HEK293 (cell line): ENCODE measurements at regions of chr5 and their contacts with region 1.

Region 1: GRCh38 chr5:150217873-150218692 is 28.2 kb downstream of the SLC6A7 start:
- H3K4me3 ChIP-seq: no peak overlapping the region
- H3K27ac ChIP-seq: no peak overlapping the region
- H3K4me1 ChIP-seq: no peaks in the 10 kb centered on the region
- CTCF ChIP-seq: peak; percentile 81

Region 2: DNA sequence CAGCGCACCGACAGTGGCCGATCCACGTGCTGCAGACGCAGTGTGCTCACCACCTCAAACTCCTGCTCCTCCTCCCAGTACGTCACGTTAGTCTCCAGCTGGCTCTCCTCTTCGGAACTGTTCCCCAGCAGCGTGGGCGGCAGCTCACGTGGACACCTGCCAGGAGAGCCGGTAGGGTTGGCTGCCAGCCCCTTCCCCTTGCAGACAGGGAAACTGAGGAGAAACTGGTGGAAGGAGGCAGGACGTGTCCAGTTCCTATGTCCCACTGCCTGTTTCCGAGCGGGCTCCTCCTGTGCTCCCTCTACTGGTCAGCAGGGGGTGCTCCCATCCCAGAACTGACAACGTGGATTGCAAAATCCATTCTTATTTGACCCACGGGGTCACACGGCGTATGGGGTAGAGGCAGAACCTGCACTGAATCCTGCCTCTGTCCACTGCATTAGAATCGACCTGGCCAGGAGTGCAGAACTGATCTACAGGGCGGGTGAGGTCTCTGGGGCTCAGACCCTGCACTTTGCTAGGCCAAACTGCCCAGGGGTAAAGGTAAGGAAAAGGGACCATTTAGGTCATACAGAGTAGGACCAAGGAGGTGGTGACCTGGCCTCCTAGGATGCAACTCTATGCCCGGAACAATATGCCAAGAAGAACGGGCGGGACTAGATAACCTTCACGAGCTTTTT is 88.1 kb before region 1 on chr5:
- CTCF ChIA-PET with region 1: interaction called, 37 read pairs
- POLR2A ChIA-PET with region 1: no interaction called
- H3K4me3 ChIP-seq: no peak overlapping the region
- H3K27ac ChIP-seq: no peak overlapping the region
- H3K4me1 ChIP-seq: no peaks in the 10 kb centered on the region
- CTCF ChIP-seq: peak; percentile 87

Region 3: DNA sequence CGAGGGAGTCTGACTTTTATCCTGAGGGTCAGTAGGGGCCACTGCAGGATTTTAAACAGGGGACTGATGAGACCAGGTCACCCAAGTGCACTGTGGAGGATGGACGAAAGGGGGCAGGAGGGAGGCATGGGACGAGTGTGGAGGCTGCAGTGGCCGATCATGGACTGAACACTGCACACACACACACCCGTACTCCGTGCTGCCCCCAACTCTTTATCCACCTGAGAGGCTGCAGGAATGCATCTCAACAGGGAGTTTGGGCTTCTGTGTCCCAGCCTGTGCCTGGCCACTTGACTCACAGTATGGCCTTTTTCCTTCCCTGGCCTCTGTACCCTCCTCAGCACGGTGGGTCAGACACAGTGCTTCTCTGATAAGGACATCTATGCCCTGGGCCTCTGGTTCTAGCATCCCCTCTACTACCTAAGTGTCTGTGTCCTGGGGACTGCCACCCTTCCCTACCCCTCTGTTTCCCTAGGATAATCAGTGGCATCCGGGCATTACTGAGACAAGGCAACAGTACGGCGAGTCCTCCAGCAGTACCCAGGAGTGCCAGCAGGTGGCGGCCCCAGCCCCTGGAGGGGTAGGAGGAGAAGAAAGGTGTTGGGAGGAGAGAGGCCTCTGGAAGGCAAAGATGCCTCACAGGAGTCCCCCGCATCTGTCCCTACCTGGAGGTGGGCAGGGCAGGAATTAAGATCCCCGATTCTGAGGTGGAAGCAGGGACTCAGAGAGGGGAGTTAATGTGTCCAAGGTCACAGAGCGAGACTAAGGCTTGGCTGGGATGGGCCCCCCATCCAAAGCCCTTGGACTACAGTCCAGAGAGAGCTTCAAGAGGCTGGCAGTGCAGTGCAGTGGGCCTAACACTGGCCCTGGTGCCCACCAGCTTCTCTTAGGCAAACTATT is 56.6 kb before region 1 on chr5:
- CTCF ChIA-PET with region 1: interaction called, 13 read pairs
- POLR2A ChIA-PET with region 1: no interaction called
- H3K4me3 ChIP-seq: peak overlapping the region; percentile 10; the same call in 1 of the 2 replicates
- H3K27ac ChIP-seq: 0 out of 2 replicates have a peak overlapping the region, but pooled peaks have one; percentile 3
- H3K4me1 ChIP-seq: no peaks in the 10 kb centered on the region
- CTCF ChIP-seq: no peak; the same call in 1 of the 2 replicates

Region 4: DNA sequence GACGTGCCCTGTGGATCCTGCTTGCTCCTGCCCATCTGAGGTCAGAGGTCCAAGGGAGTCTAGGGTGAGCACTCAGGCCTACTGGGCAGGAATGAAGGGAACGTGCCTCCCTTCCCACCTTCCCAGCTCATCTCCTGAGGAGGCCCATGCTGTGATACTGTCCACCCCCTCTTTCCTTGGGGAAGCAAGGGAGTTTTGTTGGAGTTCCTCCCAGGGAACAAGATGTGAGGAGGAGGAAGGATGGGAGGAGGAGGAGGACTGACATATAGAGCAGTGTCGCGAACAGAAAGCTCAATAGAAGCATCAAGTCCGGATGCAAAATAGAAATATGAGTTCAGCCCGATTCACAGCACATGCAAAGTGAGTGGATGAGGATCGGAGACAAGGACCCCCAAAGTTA is 12.8 kb after region 1 on chr5:
- CTCF ChIA-PET with region 1: interaction called, 11 read pairs
- POLR2A ChIA-PET with region 1: no interaction called
- H3K4me3 ChIP-seq: no peak overlapping the region
- H3K27ac ChIP-seq: no peak overlapping the region
- H3K4me1 ChIP-seq: no peaks in the 10 kb centered on the region
- CTCF ChIP-seq: no peak

Region 5: DNA sequence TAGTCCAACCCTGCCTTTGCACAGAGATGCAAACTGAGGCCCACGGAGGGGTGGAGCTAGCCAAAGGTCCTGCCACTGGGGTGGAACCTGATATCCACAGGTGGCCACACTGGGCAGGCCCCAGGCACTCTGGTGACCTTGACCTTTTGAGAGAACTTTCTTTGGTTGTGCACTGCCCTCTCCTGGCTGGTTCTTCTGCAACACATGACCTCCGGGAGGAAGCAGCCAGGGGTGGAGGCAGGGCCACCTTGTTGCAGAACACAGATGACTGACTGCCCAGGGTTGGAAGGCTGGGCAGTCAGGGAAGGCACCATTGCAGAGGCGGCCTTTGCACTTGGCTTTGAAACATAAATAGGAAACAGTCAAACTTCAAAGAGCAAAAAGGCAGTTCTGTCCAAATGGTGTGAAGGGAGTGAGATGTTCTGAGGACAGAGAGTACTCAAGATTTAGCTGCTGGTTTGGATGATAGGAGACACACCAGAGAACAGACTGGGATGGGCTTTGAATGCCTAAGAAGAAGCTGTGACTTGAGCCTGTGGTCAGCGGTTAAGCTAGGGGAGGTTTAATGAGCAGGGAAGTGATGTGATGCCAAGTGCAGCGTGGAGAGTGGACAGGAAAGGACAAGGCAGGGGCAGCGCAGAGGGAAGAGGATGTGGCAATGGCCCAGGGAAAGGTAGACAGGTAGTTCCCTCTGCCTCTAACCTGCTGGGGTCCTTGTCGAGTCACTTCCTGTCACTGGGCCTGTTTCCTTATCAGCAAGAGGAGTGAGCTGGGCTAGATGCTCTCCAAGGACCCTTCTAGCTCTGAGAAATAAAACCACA is 132.7 kb after region 1 on chr5:
- CTCF ChIA-PET with region 1: interaction called, 12 read pairs
- POLR2A ChIA-PET with region 1: no interaction called
- H3K4me3 ChIP-seq: no peak overlapping the region
- H3K27ac ChIP-seq: no peak overlapping the region
- H3K4me1 ChIP-seq: no peaks in the 10 kb centered on the region
- CTCF ChIP-seq: peak; percentile 86